ENCODE measurements at regions of chr15 and their contacts with region 1.

Region 1: DNA sequence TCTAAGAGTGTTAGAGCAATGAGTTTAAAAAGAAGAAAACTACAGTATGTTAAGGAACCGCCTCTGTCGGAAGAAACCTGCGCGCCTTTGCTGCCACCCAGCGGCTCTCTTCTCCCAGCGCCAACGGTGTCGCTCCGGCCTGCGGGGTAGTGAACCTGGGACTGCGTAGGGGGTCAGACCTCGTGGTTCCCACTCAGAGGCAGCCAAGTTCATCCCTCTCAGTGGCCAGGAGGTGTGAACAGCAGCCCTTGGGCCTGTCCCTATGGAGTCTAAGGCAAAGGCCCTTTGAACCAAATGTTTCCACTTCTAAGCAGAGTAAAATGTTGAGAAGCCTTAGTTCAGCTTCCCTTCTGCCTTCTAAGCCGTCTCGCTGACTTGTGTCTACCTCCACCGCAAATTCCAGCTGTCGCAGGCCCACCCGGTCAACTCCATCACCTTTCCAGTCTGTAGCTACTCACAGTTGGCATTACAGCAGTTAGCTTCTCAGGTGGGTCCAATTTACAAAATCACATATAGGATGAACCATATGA is 980 bp upstream of the RAB27A start:
- DNase-seq: peak; percentile 75 to 87 (median 81)
- H3K4me3 ChIP-seq: peak overlapping the region; percentile 72 to 99 (median 95)
- H3K4me3 Mint-ChIP-seq: peak overlapping the region; percentile 94 to 96
- H3K27ac ChIP-seq: peak overlapping the region; percentile 95 to 99
- H3K27ac Mint-ChIP-seq: peak overlapping the region; percentile 89 to 99 (median 91)
- H3K4me1 ChIP-seq: peaks cover 36 to 55% of the 10 kb centered on the region in 2 donors
- H3K4me1 Mint-ChIP-seq: peaks cover 50% of the 10 kb centered on the region
- H3K27me3 ChIP-seq: no peaks in the 10 kb centered on the region
- H3K27me3 Mint-ChIP-seq: peaks cover 0 to 1% (median 0%) of the 10 kb centered on the region in 3 donors
- CTCF ChIP-seq: peak; percentile 90

Region 2: GRCh38 chr15:55250392-55250791 is 40.2 kb before region 1 on chr15:
- intact Hi-C with region 1: loop called (anchors 2 to 5 kb)
- DNase-seq: peak; percentile 89 to 98 (median 94)
- H3K4me3 ChIP-seq: peak overlapping the region in 1 of 3 experiments; percentile 58
- H3K4me3 Mint-ChIP-seq: peak overlapping the region in 1 of 2 donors; percentile 70
- H3K27ac ChIP-seq: peak overlapping the region; percentile 91 to 94
- H3K27ac Mint-ChIP-seq: peak overlapping the region; percentile 91 to 99 (median 97)
- H3K4me1 ChIP-seq: peaks cover 94% of the 10 kb centered on the region in 2 donors
- H3K4me1 Mint-ChIP-seq: peaks cover 89% of the 10 kb centered on the region
- H3K27me3 ChIP-seq: no peaks in the 10 kb centered on the region
- H3K27me3 Mint-ChIP-seq: peaks cover 0 to 2% (median 0%) of the 10 kb centered on the region in 3 donors
- CTCF ChIP-seq: no peak

Measured in CD14-positive monocyte (primary cell).